Aorta (tissue), 5 donors: ENCODE measurements at regions of chr4 and their contacts with region 1.

Region 1: GRCh38 chr4:138182838-138183426 is 59.2 kb downstream of the SLC7A11 start:
- DNase-seq: no peak
- ATAC-seq: no peak
- H3K4me3 ChIP-seq: no peak overlapping the region
- H3K27ac ChIP-seq: no peak overlapping the region
- H3K4me1 ChIP-seq: peaks cover 0 to 3% of the 10 kb centered on the region in 2 donors
- H3K27me3 ChIP-seq: no peaks in the 10 kb centered on the region

Region 2: DNA sequence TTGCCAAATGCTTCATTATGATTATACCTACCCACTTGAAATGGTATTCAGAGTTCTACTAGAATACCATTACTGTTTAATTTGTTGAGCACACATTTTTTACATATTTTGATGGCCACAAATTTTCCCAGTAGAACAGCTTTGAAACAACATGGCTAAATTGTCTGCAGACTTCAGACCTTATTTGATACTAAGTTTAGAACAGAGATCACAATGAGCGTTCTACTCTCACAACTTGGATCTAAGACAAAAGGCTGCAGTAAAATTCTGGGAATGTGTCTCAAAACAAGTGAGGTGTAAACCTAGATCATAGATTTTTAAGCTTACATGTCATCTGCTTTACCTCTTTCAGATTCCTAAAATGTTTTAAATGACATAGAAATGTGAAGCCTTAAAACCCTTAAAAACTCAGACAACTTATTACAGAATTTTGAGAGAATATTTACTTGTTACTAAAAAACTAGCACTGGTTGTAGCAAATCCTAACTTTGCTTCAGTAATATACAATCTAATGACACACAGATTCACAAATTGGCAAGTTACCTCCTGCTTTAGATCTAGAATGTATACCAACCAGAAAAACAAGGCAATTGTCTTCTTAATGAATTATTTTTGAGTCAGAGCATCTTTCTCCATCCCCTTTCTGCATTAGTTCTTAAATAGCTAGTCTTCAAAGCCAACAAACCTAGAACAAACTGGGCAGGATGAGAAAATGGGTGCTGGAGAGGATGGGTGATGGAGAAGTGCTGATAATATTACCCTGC is 184.1 kb before region 1 on chr4:
- intact Hi-C with region 1: no loop called
- DNase-seq: no peak
- ATAC-seq: no peak
- H3K4me3 ChIP-seq: no peak overlapping the region
- H3K27ac ChIP-seq: no peak overlapping the region
- H3K4me1 ChIP-seq: no peaks in the 10 kb centered on the region
- H3K27me3 ChIP-seq: no peaks in the 10 kb centered on the region

Region 3: DNA sequence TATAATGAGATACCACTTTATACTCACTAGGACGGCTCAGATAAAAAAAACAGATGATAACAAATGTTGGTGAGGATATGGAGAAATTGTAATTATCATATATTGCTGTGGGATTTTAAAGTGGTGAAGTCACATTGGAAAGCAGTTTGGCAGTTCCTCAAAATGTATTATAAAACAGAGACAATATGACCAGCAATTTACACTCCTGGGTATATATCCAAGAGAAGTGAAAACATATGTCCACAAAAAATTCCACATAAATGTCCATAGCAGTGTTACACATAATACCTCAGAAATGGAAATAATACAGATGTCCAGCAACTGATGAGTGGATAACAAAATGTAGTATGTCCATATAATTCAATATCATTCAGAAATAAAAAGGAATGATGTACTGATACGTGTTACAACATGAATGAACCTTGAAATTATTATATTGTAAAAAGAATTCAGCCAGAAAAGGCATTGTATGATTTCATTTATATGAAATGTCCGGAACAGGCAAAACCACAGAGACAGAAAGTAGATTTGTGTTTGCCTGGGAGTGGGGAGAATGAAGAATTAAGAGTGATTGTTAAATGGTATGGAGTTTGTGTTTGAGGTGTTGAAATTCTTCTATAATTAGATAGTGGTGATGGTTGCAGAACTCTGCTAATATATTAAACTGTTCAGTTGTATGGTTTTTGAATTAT is 161.6 kb before region 1 on chr4:
- intact Hi-C with region 1: no loop called
- DNase-seq: no peak
- ATAC-seq: no peak
- H3K4me3 ChIP-seq: no peak overlapping the region
- H3K27ac ChIP-seq: no peak overlapping the region
- H3K4me1 ChIP-seq: no peaks in the 10 kb centered on the region
- H3K27me3 ChIP-seq: no peaks in the 10 kb centered on the region

Region 4: DNA sequence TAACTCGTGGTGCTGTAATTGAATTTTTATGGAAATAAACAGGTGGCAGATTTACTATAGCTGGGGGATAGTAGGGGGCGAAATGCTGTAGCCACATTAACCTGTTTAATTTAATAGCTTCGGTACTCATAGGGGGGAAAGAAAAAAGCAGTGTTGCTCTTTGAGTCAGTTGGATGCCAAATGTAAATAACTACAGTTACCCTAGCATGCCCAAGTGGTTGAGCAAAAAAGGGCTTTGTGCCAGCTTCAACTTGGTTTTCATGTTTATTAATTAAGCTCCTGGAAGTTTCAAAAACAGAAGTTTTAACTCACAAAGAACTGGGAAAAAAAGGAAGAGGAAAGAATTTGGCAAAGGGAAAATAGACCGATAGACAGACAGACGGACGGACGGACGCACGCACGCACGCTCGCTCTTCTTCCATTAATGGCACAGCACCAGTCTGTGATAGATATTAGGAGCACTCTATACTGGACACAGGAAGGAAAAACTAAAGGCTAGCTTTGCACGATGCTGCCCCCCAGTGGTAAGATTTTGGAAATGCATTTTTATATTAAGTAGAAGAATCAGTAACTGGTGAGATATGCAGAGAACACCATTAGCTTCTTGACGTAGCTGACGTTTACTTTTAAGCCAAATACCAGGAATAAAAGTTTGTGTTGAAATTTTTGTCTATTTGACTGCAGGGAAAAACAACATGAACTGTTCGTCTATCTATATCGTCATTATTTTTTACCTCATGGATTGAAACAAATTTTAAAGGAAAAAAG is 92.6 kb before region 1 on chr4:
- intact Hi-C with region 1: loop called in 1 of 2 experiments (anchors 5 kb)
- DNase-seq: no peak
- ATAC-seq: peak; percentile 90
- H3K4me3 ChIP-seq: peak overlapping the region in 1 of 2 donors; percentile 13
- H3K27ac ChIP-seq: no peak overlapping the region
- H3K4me1 ChIP-seq: peaks cover 0 to 9% of the 10 kb centered on the region in 2 donors
- H3K27me3 ChIP-seq: no peaks in the 10 kb centered on the region

Region 5: GRCh38 chr4:138680989-138681604 is 498.2 kb after region 1 on chr4:
- intact Hi-C with region 1: loop called (anchors 5 kb)
- DNase-seq: peak; percentile 84 to 90
- ATAC-seq: peak; percentile 89
- H3K4me3 ChIP-seq: no peak overlapping the region
- H3K27ac ChIP-seq: no peak overlapping the region
- H3K4me1 ChIP-seq: no peaks in the 10 kb centered on the region
- H3K27me3 ChIP-seq: no peaks in the 10 kb centered on the region